ENCODE measurements at regions of chr3 and their contacts with region 1.

Region 1: GRCh38 chr3:134299185-134299887 is 48.7 kb upstream of the RYK start:
- DNase-seq: no peak
- ATAC-seq: no peak
- H3K4me3 Mint-ChIP-seq: no peak overlapping the region
- H3K27ac Mint-ChIP-seq: no peak overlapping the region
- H3K4me1 Mint-ChIP-seq: no peaks in the 10 kb centered on the region
- H3K27me3 Mint-ChIP-seq: peaks cover 32% of the 10 kb centered on the region

Region 2: DNA sequence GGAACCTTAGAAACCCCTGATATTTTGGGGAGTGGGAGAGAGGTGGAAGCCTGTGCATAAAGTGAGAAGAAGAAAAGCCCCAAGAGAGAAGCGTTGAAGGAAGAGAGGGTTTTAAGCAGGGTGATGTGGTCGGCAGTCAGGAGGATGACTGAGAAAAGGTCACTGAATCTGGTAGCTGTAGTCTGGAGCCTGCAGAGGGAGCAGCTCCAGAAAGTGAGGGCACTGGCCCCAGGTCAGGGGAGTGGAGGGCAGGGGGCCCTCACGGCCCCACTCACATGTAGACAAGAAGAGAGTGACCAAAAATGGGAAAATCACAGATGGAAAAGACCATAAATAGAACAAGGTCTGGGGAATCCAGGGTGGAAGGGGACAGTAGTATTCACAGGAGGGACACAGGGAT is 154.2 kb before region 1 on chr3:
- CTCF ChIA-PET with region 1: no interaction called
- POLR2A ChIA-PET with region 1: no interaction called
- intact Hi-C with region 1: no loop called
- DNase-seq: no peak
- ATAC-seq: no peak
- H3K4me3 Mint-ChIP-seq: no peak overlapping the region
- H3K27ac Mint-ChIP-seq: no peak overlapping the region
- H3K4me1 Mint-ChIP-seq: peaks cover 10% of the 10 kb centered on the region
- H3K27me3 Mint-ChIP-seq: no peaks in the 10 kb centered on the region

Region 3: DNA sequence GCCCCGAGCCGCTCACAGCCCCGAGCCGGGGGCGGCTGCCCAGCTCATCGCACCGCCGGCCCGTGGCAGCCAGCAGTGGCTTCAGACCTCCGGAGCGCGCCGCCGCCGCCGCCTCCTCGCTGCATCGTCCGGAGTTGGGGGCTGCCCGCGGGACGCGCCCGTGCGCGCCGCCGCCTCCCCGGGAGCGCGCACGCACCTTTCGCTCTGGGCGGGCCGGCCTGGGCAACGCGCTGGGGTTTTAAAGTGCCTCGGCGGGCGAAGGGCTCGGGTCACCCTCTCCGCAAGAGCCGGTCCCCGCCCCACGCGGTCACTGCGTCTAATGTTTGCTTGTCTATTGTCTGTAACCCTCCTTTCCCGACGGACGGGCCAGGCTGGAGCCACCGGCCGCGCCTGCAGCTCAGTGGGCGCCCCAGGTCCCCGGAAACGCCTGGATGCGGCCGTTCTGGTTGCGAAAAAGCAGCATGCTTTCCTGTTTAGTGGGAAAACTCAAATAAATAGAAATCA is 48.6 kb before region 1 on chr3 and contains the start of gene RYK:
- CTCF ChIA-PET with region 1: interaction called, 5 read pairs
- POLR2A ChIA-PET with region 1: no interaction called
- intact Hi-C with region 1: loop called (anchors 1 kb)
- DNase-seq: peak; percentile 84
- ATAC-seq: peak; percentile 78
- H3K4me3 Mint-ChIP-seq: peak within 1 kb of the TSS; percentile 98
- H3K27ac Mint-ChIP-seq: peak within 1 kb of the TSS; percentile 98
- H3K4me1 Mint-ChIP-seq: peaks cover 68% of the 10 kb centered on the region
- H3K27me3 Mint-ChIP-seq: peaks cover 3% of the 10 kb centered on the region
- total RNA-seq, gene RYK: 23.5 to 24.0 TPM

Measured in activated CD4-positive, alpha-beta T cell treated with anti-CD3 and anti-CD28 coated beads for 36 hours (primary cell).